ENCODE measurements at regions of chr9 and their contacts with region 1.

Region 1: DNA sequence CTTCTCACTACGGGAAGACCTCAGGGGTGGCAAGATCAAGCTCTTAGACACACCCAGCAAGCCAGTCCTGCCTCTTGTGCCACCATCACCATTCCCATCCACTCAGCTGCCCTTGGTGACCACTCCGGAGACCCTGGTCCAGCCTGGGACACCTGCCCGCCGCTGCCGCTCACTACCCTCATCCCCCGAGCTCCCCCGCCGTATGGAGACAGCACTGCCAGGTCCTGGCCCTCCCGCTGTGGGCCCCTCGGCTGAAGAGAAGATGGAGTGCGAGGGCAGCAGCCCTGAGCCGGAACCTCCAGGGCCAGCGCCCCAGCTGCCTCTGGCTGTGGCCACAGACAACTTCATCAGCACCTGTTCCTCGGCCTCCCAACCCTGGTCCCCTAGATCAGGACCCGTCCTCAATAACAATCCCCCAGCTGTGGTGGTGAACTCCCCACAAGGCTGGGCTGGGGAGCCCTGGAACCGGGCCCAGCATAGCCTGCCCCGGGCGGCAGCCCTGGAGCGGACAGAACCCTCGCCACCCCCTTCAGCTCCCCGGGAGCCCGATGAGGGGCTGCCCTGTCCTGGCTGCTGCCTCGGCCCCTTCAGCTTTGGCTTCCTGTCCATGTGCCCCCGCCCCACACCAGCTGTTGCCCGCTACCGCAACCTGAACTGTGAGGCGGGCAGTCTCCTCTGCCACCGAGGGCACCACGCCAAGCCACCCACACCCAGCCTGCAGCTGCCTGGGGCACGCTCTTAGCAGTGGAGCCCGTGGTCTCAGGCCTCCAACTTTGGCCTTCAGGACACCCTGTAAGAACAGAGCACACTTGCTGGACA is 4.1 kb downstream of the TESK1 start:
- DNase-seq: peak; percentile 70 to 87
- ATAC-seq: peak; percentile 67 to 81 (median 68)
- H3K4me3 ChIP-seq: peak overlapping the region; percentile 22
- H3K27ac ChIP-seq: peak overlapping the region; percentile 82
- H3K4me1 ChIP-seq: peaks cover 25% of the 10 kb centered on the region
- H3K27me3 ChIP-seq: no peaks in the 10 kb centered on the region
- CTCF ChIP-seq: no peak

Region 2: DNA sequence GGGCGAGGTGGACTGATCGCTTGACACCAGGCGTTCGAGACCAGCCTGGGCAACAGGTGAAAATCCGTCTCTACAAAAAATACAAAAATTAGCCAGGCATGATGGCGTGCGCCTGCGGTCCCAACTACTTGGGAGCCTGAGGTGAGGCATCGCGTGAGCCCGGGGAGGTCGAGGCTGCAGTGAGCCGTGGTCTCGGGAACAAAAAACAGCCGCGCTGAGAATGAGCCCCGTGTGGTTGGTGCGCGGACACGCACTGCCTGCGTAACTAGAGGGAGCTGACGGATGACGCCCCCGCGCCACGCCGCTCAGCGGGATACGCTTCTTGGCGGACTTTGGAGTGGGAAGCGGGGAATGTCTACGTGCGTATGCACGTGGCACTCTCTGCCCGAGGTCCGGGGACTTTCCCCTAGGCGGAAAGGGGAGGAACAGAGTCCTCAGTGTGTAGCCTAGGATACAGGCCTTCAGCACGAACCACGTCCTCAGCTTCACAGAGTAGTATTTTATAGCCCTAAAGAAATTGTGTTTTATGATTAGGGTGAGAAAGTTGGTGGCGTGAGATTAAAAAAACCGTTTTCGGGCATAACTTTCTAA is 48.4 kb after region 1 on chr9 and contains the start of gene RMRP:
- intact Hi-C with region 1: loop called in 1 of 2 experiments (anchors 2 kb)
- DNase-seq: peak; percentile 98 to 99
- ATAC-seq: peak; percentile 88 to 93 (median 90)
- H3K4me3 ChIP-seq: peak within 1 kb of the TSS; percentile 89
- H3K27ac ChIP-seq: peak within 1 kb of the TSS; percentile 100
- H3K4me1 ChIP-seq: peaks cover 26% of the 10 kb centered on the region
- H3K27me3 ChIP-seq: no peaks in the 10 kb centered on the region
- CTCF ChIP-seq: peak; percentile 33
- total RNA-seq, gene RMRP: 3,787 to 10,280 (median 6,744) TPM

Region 3: GRCh38 chr9:35774907-35775635 is 165.9 kb after region 1 on chr9:
- intact Hi-C with region 1: no loop called
- DNase-seq: peak in 1 of 2 donors; percentile 27
- ATAC-seq: no peak
- H3K4me3 ChIP-seq: no peak overlapping the region
- H3K27ac ChIP-seq: peak overlapping the region; percentile 44
- H3K4me1 ChIP-seq: peaks cover 28% of the 10 kb centered on the region
- H3K27me3 ChIP-seq: no peaks in the 10 kb centered on the region
- CTCF ChIP-seq: no peak

Measured in psoas muscle (tissue), 8 donors.